ENCODE measurements at regions of chr5 and their contacts with region 1.

Region 1: GRCh38 chr5:137695651-137696428 is 40.0 kb downstream of the KLHL3 start:
- DNase-seq: no peak
- ATAC-seq: peak; percentile 48
- H3K4me3 Mint-ChIP-seq: peak overlapping the region; percentile 11
- H3K27ac Mint-ChIP-seq: peak overlapping the region; percentile 84
- H3K4me1 Mint-ChIP-seq: peaks cover 26% of the 10 kb centered on the region
- H3K27me3 Mint-ChIP-seq: no peaks in the 10 kb centered on the region

Region 2: DNA sequence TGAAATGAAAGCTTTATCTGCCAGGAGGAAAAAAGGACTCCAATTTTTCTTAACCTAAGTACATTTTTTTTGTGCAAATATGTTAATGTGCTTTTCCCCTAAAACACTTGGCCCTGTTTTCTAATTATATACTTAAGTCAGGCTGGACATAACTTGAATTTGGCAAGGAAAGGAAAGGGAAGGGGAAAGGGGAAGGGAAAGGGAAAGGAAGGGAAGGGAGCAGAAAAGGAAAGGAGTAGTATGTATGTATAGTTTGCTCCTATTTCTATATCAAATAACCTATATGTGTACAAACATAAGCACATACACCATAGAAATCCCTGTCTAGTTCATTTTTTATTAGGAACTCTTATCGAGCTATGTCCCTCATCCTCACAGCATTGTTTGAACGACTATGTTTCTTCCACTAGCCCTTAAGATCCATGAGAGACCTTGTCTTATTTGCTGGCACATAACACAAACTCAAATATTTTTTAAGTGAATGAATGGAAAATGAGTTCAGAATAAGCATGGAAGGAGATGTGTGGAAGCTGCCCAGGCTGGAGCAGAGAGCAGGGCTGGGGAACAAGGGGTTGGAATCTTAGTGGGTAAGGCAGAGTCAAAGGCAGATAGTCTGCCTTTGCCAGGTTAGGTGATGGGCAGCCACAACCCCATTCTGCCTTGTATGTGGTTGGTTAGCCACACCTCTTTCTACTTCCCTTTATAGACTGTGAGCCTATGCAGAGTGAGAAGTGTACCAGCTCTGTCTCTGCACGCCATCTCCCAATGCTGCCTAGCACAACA is 30.0 kb before region 1 on chr5:
- CTCF ChIA-PET with region 1: interaction called, 47 read pairs
- DNase-seq: peak; percentile 77
- ATAC-seq: peak; percentile 98
- H3K4me3 Mint-ChIP-seq: no peak overlapping the region
- H3K27ac Mint-ChIP-seq: peak overlapping the region; percentile 72
- H3K4me1 Mint-ChIP-seq: peaks cover 16% of the 10 kb centered on the region
- H3K27me3 Mint-ChIP-seq: no peaks in the 10 kb centered on the region

Measured in activated CD8-positive, alpha-beta memory T cell treated with anti-CD3 and anti-CD28 coated beads, Interleukin-2, amount 10 ng/mL, durations not matched to agents 7 days and 5 days (primary cell).